ENCODE measurements at regions of chr2 and their contacts with region 1.

Region 1: GRCh38 chr2:219689676-219690628 is 62.5 kb downstream of the SLC4A3 start:
- DNase-seq: peak; percentile 70
- CTCF ChIP-seq: peak; percentile 68

Region 2: DNA sequence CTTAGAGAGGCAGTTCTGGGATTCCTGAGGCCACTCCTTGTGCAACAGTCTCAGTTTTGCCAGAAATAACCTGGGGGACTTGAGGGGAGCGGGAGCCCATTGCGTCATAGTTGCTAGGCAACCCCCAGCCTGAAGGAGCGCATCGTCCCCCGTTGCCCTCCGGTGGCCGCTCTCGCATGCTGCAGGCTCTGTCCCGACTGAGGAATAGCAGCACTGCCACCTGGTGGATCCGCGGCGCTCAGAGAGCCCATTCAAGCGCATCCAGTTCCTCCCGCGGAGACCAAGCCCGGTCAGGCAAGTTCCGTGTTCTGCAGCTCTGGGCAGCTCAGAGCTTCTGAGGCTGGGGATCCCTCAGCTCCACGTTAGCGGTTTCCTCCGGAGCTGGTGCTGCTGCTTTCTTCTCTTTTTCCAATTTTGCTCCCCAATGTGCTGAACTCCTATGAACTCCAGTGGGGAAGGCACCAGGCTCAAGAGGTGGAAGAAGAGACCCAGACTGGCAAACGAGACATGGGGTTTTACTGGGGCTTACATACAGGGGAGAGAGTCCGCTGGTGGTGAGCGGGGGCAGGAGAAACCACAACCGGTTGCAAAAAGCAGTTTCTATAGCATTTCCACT is 47.4 kb before region 1 on chr2:
- CTCF ChIA-PET with region 1: interaction called, 12 read pairs
- POLR2A ChIA-PET with region 1: no interaction called
- DNase-seq: peak; percentile 94
- CTCF ChIP-seq: peak; percentile 100

Region 3: GRCh38 chr2:219675221-219675620 is 14.7 kb before region 1 on chr2:
- CTCF ChIA-PET with region 1: interaction called, 32 read pairs
- POLR2A ChIA-PET with region 1: no interaction called
- DNase-seq: no peak
- CTCF ChIP-seq: no peak

Region 4: DNA sequence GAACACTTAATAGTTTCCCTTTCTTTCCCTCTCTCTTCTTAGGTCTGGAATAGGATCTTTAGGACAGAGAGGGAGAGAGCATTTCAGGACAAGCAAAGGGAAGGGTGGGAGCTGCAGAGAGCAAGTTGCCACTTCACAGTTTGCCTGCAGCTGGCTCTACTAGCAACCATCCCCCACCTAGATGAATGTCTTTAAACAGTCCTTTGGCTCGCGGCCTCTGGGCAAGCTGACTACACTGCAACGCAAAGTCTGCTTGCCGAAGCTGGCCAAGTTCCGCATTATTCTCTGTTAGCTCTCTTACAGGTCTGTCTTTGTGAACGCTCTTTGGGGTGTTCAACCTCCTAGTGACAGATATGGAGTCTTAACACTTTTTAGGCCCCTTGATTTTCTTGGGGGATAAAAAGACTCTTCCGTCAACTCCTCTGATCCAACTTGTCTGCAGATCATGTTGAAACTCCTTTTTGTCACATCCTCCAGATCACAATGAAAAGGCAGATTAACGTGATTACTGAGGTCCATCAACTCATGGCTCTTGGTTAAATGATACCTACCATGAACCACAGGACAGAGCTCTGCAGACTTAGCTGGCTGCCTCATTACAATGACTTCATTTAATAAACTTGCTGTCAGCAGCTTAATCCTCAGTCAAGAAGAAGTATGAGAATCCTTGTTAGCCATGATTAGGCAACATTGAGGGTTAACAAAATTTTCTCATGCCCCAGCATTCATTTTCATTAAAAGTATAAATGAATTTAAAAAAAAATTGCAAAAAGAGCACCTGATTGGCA is 12.1 kb after region 1 on chr2:
- CTCF ChIA-PET with region 1: interaction called, 22 read pairs
- POLR2A ChIA-PET with region 1: no interaction called
- DNase-seq: no peak
- CTCF ChIP-seq: no peak